IMR-90 (cell line): ENCODE measurements at regions of chr1 and their contacts with region 1.

Region 1: DNA sequence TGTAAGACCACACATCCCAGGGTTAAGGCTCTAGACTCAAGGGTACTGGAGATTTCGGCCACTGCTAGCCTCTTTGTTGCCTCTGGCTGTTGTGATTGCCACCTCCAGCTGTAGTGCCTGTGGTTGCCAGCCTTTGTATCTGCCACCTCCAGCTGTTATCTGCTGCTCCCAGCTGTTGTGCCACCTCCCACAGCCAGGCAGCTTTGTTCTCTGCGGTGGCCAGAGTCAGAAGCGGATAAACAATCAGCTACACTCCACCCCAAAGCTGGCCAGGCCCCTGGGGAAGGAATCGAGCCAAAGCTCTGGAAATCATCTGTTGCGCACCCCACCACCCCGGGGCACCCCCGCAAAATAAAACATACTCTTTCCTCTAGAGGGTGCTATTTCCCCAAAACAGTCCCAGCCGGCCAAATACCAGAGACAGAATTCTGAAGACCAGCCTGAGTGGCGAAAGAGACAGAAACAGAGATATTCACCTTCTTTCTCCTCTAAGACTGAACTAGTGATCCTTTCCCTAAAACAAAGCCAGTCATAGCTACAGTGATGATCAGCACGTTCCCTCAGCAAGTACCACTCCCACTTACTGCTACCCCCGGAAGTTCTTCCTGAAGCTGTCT is 14.8 kb upstream of the PIGM start:
- DNase-seq: peak; percentile 21
- ATAC-seq: peak; percentile 86
- H3K4me3 ChIP-seq: no peak overlapping the region
- H3K27ac ChIP-seq: no peak overlapping the region
- H3K4me1 ChIP-seq: no peaks in the 10 kb centered on the region
- H3K27me3 ChIP-seq: peaks cover 35% of the 10 kb centered on the region
- CTCF ChIP-seq: peak; percentile 67
- POLR2A ChIP-seq: no peak
- RAD21 ChIP-seq: peak; percentile 47

Region 2: DNA sequence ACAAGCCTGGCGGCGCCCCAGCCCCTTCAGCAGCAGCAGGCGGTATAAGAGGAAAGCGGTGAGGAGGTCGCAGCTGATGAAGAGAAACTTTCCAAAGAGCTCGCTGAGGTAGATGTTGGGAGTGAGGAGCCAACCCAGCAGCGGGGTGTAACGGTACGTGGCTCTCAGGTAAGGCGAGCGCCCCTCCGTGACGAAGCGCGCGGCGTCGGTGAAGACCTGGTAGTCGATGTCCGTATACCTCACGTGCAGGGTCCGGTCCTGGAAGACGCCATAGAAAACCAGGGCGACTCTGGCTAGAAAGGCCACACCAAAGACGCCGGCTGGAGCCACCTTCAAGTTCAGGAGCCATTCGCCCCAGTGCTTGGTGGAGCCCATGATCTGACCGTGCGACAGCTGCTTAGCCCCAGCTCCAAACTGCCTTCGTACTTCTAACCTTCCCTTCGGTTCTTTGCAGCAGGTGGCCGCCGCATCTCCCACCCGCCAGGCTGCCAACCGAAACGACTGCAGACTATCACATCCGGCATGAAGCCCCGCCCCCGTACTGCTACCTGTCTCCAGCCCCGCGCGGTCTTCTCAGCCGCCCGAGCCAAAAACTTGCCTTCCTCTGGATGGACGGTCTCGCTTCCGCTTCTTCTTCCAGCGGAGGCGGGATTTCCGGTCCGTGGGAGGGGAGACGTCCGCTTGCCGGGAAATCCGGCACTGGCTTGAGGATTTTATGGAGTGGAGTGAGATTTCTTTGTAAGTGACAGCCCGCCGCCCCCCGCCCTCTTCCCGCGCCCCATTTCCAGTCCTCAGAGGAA is 15.0 kb before region 1 on chr1 and contains the start of gene PIGM:
- CTCF ChIA-PET with region 1: interaction called, 10 read pairs
- POLR2A ChIA-PET with region 1: no interaction called
- dilution Hi-C with region 1: no loop called
- in situ Hi-C with region 1: no loop called
- intact Hi-C with region 1: no loop called
- DNase-seq: peak; percentile 85
- ATAC-seq: peak; percentile 95
- H3K4me3 ChIP-seq: peak within 1 kb of the TSS; percentile 91
- H3K27ac ChIP-seq: peak within 1 kb of the TSS; percentile 55
- H3K4me1 ChIP-seq: peaks cover 6% of the 10 kb centered on the region
- H3K27me3 ChIP-seq: no peaks in the 10 kb centered on the region; the same call in 1 of the 2 replicates
- CTCF ChIP-seq: no peak
- POLR2A ChIP-seq: no peak
- RAD21 ChIP-seq: no peak
- total RNA-seq, gene PIGM: 2.9 and 4.4 TPM in 2 replicates

Region 3: DNA sequence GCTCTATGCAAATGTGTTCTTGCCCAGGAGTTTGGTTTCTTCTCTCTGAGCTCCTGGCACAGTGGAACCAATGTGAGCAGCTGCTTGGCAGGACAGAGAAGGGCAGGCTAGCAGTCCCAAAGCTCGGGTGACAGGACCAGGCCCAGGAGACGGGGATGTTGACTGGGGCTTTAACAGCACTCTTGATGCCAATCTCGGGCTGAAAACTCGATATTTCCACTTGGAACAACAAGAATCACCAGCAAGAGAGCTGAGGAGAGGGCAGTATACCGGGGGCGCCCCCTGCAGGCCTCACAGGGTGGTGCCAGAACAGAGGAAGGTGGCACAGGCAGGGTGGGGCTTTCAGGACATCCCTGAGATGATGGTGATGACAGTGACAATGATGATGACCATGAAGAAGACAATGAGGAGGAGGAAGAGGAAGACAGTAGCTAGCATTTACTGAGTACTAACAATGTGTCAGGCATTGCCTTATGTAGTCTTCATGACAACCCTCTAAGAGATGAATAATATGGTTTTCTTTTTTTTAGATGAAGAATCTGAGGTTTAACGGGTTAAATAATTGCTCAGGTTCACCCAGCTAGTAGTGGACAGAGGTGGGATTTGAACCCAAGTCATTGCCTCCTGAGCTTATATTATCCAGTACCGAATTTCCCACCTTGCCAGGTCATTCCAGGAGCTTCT is 32.1 kb after region 1 on chr1:
- CTCF ChIA-PET with region 1: interaction called, 16 read pairs
- POLR2A ChIA-PET with region 1: no interaction called
- dilution Hi-C with region 1: no loop called
- in situ Hi-C with region 1: no loop called
- intact Hi-C with region 1: loop called (anchors 2 kb)
- DNase-seq: no peak
- ATAC-seq: peak; percentile 75
- H3K4me3 ChIP-seq: no peak overlapping the region
- H3K27ac ChIP-seq: no peak overlapping the region
- H3K4me1 ChIP-seq: peaks cover 2% of the 10 kb centered on the region; the same call in 1 of the 2 replicates
- H3K27me3 ChIP-seq: peaks cover 66% of the 10 kb centered on the region
- CTCF ChIP-seq: peak; percentile 57
- POLR2A ChIP-seq: no peak
- RAD21 ChIP-seq: peak; percentile 45